SK-N-SH (cell line): ENCODE measurements at regions of chr1 and their contacts with region 1.

Region 1: GRCh38 chr1:205658943-205659581 is 21.2 kb downstream of the SLC45A3 start:
- DNase-seq: peak; percentile 93
- H3K4me3 ChIP-seq: no peak overlapping the region; a peak in 1 of 4 replicates
- H3K27ac ChIP-seq: no peak overlapping the region
- H3K4me1 ChIP-seq: peaks cover 0 to 4% of the 10 kb centered on the region in 2 experiments; a peak in 1 of 4 replicates
- H3K27me3 ChIP-seq: no peaks in the 10 kb centered on the region
- CTCF ChIP-seq: peak; percentile 88
- EP300 ChIP-seq: no peak
- RAD21 ChIP-seq: peak; percentile 91

Region 2: GRCh38 chr1:205528887-205529825 is 129.9 kb before region 1 on chr1:
- CTCF ChIA-PET with region 1: interaction called, 313 read pairs
- POLR2A ChIA-PET with region 1: interaction called, 3 read pairs
- DNase-seq: peak; percentile 97
- H3K4me3 ChIP-seq: peak overlapping the region; percentile 40 to 59
- H3K27ac ChIP-seq: no peak overlapping the region
- H3K4me1 ChIP-seq: peaks cover 0 to 21% of the 10 kb centered on the region in 2 experiments; a peak in 1 of 4 replicates
- H3K27me3 ChIP-seq: no peaks in the 10 kb centered on the region
- CTCF ChIP-seq: peak; percentile 90
- EP300 ChIP-seq: no peak
- RAD21 ChIP-seq: peak; percentile 83

Region 3: GRCh38 chr1:205591522-205592351 is 67.3 kb before region 1 on chr1:
- CTCF ChIA-PET with region 1: interaction called, 443 read pairs
- POLR2A ChIA-PET with region 1: interaction called, 10 read pairs
- DNase-seq: peak; percentile 87
- H3K4me3 ChIP-seq: peak overlapping the region; percentile 41 to 59
- H3K27ac ChIP-seq: peak overlapping the region in 1 of 2 experiments; percentile 36; a peak in 1 of 4 replicates
- H3K4me1 ChIP-seq: peaks cover 0 to 10% of the 10 kb centered on the region in 2 experiments; a peak in 1 of 4 replicates
- H3K27me3 ChIP-seq: no peaks in the 10 kb centered on the region
- CTCF ChIP-seq: peak; percentile 97
- EP300 ChIP-seq: no peak
- RAD21 ChIP-seq: peak; percentile 95

Region 4: DNA sequence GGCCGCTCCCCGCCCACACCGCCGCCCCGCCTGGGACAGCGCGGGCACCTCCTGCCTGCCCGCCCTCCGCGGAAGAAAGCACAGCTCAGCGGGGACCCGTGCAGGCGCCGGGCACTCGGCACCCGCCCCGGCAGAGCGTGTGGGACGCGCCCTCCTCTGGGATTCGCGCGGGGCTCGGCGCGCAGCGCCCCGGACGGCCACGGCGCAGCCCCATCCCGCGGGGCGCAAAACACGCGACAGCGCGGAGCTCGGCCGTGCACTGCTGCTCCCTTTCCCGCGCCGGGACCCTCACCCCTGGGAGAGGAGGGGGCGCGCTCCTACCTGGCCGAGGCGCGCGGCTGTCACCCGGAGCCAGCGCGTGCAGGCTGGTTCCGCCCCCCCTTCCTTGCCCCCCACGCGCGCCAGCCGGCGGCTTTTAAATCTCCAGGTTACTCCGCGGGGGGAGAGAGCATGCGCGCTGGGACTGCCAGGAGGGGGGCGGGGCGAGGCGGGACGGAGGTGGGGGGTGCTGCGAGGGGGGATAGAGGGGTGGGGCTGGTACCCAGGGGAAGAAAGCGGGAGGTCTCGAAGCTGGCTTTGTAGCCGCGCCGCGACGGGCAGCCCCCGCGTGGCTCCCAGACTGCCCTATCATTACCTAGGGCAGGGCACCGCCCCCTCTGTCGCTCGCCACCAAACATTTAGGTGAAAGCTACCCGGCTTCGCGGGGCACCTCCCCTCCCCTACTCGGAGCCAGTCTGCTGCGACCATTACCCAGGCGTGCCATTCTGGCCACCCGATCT is 21.2 kb after region 1 on chr1 and contains the start of gene SLC45A3:
- CTCF ChIA-PET with region 1: interaction called, 214 read pairs
- POLR2A ChIA-PET with region 1: no interaction called
- DNase-seq: peak; percentile 94
- H3K4me3 ChIP-seq: peak within 1 kb of the TSS; percentile 70 to 78
- H3K27ac ChIP-seq: peak within 1 kb of the TSS in 1 of 2 experiments; percentile 56; a peak in 2 of 4 replicates
- H3K4me1 ChIP-seq: peaks cover 8 to 12% of the 10 kb centered on the region in 2 experiments; a peak in 1 of 4 replicates
- H3K27me3 ChIP-seq: no peaks in the 10 kb centered on the region
- CTCF ChIP-seq: no peak
- EP300 ChIP-seq: no peak
- RAD21 ChIP-seq: no peak
- polyA plus RNA-seq, gene SLC45A3: 4.6 and 4.7 TPM in 2 replicates

Region 5: DNA sequence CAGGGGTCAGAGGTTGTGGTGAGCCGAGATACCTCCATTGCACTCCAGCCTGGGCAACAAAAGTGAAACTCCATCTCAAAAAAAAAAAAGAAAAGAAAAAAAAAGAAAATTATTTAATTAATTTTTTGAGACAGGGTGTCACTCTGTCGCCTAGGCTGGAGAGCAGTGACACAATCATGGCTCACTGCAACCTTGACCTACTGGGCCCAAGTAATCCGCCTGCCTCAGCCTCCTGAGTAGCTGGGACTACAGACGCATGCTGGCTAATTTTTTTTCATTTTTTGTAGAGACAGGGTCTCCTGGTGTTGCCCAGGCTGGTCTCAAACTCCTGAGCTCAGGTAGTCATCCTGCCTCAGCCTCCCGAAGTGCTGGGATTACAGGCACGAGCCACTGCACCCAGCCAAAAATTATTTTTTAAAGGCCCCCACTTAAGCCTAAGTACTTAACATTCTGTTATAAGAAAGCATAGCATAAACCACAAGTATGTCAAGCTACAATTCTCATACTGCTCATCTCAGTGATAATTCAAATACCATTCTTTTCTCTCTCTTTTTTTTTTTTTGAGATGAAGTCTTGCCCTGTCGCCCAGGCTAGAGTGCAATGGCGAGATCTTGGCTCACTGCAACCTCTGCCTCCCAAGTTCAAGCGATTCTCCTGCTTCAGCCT is 71.0 kb after region 1 on chr1:
- CTCF ChIA-PET with region 1: interaction called, 21 read pairs
- POLR2A ChIA-PET with region 1: no interaction called
- DNase-seq: no peak
- H3K4me3 ChIP-seq: no peak overlapping the region
- H3K27ac ChIP-seq: no peak overlapping the region
- H3K4me1 ChIP-seq: no peaks in the 10 kb centered on the region
- H3K27me3 ChIP-seq: no peaks in the 10 kb centered on the region
- CTCF ChIP-seq: no peak
- EP300 ChIP-seq: no peak
- RAD21 ChIP-seq: no peak

Region 6: GRCh38 chr1:205967555-205968335 is 308.7 kb after region 1 on chr1:
- CTCF ChIA-PET with region 1: interaction called, 10 read pairs
- POLR2A ChIA-PET with region 1: no interaction called
- DNase-seq: no peak
- H3K4me3 ChIP-seq: no peak overlapping the region
- H3K27ac ChIP-seq: no peak overlapping the region
- H3K4me1 ChIP-seq: no peaks in the 10 kb centered on the region
- H3K27me3 ChIP-seq: no peaks in the 10 kb centered on the region
- CTCF ChIP-seq: no peak
- EP300 ChIP-seq: no peak
- RAD21 ChIP-seq: no peak